Activated CD4-positive, alpha-beta memory T cell treated with anti-CD3 and anti-CD28 coated beads, Interleukin-2, amount 10 ng/mL, durations not matched to agents 7 days and 5 days (primary cell): ENCODE measurements at regions of chr16 and their contacts with region 1.

Region 1: DNA sequence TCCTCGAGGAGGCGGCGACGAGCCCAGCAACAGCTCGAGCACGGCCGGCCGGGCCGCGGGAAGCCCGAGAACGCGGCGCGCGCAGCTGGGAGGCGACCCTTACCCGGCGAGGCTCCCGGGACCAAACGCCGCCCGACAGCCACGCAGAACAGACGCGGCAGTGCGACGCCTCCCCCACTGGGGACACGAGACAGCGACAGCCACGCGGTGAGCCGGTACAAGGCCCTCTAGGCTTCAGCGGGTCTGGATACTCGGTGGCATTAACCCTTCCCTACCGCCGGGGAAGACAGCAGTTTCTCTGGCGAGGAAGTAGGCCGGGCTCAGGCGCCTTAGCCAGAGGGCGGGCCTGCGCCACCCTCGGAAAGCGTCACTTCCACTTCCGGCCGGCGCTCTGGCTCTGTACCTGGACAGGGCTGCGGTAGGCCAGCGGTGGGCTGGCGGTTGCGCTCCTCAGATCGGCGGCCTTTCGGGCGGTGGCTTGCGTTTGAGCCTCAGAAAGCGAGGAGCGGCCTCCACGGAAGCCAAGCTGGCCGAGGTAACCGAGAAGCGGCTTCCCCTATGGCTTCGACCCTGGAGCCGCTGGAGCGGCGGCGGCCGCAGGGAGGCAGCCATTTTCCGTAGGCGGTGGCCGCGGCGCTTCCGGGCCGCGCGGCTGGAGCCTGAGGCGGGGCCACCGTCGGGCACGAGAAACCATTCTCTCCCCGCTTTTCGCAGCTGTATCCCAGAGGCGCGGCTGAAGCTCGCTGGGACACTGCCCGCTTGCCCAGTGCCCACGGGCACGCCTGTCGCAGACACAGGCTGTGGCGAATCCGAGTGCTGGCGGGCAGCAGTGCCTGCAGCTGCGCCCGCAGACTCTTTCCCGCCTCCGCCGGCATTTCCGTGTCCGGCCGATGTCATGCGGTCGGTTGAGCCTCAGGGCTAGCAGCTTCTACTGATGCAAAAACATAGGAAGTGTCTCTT is at the starts of genes TIGD7 and ZNF75A:
- DNase-seq: peak; percentile 86
- H3K4me3 Mint-ChIP-seq: peak within 1 kb of the TSS; percentile 73
- H3K27ac Mint-ChIP-seq: peak within 1 kb of the TSS; percentile 70
- H3K4me1 Mint-ChIP-seq: peaks cover 17% of the 10 kb centered on the region
- H3K27me3 Mint-ChIP-seq: no peaks in the 10 kb centered on the region
- total RNA-seq, gene TIGD7: 5.4 to 7.6 TPM
- total RNA-seq, gene ZNF75A: 34.2 to 36.7 TPM

Region 2: DNA sequence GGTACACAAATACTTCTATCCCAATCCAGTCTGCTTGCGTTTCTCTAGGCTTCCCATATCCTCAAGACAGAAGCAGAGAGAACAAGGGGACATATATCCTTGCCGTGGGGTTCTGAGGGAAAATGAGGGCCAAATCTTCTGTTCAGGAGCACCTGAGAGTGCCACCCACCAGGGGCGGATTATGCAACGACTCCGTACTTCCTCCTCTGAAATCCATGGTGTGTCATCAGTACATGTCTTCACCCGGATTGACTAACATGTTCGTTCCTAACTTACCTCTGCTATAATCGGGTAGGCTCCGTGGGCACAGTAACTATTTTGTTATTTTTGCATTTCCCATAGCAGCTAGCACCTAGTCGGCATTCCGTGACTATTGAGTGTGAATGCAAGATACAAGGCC is 62.7 kb before region 1 on chr16:
- CTCF ChIA-PET with region 1: no interaction called
- POLR2A ChIA-PET with region 1: no interaction called
- DNase-seq: no peak
- H3K4me3 Mint-ChIP-seq: no peak overlapping the region
- H3K27ac Mint-ChIP-seq: no peak overlapping the region
- H3K4me1 Mint-ChIP-seq: no peaks in the 10 kb centered on the region
- H3K27me3 Mint-ChIP-seq: no peaks in the 10 kb centered on the region

Region 3: GRCh38 chr16:3264137-3265036 is 41.0 kb before region 1 on chr16:
- CTCF ChIA-PET with region 1: no interaction called
- POLR2A ChIA-PET with region 1: interaction called, 24 read pairs
- DNase-seq: peak; percentile 96
- H3K4me3 Mint-ChIP-seq: peak overlapping the region; percentile 80
- H3K27ac Mint-ChIP-seq: peak overlapping the region; percentile 97
- H3K4me1 Mint-ChIP-seq: peaks cover 30% of the 10 kb centered on the region
- H3K27me3 Mint-ChIP-seq: no peaks in the 10 kb centered on the region

Region 4: GRCh38 chr16:3317315-3317999 is 12.1 kb after region 1 on chr16:
- CTCF ChIA-PET with region 1: interaction called, 5 read pairs
- POLR2A ChIA-PET with region 1: interaction called, 24 read pairs
- DNase-seq: no peak
- H3K4me3 Mint-ChIP-seq: no peak overlapping the region
- H3K27ac Mint-ChIP-seq: no peak overlapping the region
- H3K4me1 Mint-ChIP-seq: no peaks in the 10 kb centered on the region
- H3K27me3 Mint-ChIP-seq: no peaks in the 10 kb centered on the region

Region 5: DNA sequence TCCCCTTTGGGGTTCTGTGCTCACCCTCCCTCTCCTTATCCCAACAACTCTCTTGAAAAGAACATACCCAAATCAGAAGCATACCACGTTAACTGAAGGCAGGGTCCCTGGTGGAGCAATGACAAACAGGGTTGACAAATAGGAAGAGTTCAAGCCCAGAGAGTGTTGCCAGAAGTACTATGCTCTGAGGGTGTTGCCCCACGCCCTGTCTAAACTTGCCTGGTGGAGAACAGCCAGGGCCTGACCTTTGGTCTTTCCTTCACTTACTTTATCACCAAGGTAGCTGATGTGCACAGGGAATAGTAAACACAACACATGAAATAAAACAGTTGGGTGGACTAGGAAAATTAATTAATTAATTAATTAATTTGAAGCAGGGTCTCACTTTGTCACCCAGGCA is 23.3 kb after region 1 on chr16:
- CTCF ChIA-PET with region 1: no interaction called
- POLR2A ChIA-PET with region 1: no interaction called
- DNase-seq: no peak
- H3K4me3 Mint-ChIP-seq: no peak overlapping the region
- H3K27ac Mint-ChIP-seq: no peak overlapping the region
- H3K4me1 Mint-ChIP-seq: no peaks in the 10 kb centered on the region
- H3K27me3 Mint-ChIP-seq: no peaks in the 10 kb centered on the region

Region 6: GRCh38 chr16:3501783-3502420 is 196.5 kb after region 1 on chr16:
- CTCF ChIA-PET with region 1: no interaction called
- POLR2A ChIA-PET with region 1: interaction called, 11 read pairs
- DNase-seq: no peak
- H3K4me3 Mint-ChIP-seq: peak overlapping the region; percentile 91
- H3K27ac Mint-ChIP-seq: peak overlapping the region; percentile 96
- H3K4me1 Mint-ChIP-seq: peaks cover 62% of the 10 kb centered on the region
- H3K27me3 Mint-ChIP-seq: peaks cover 3% of the 10 kb centered on the region